ENCODE measurements at regions of chr5 and their contacts with region 1.

Region 1: DNA sequence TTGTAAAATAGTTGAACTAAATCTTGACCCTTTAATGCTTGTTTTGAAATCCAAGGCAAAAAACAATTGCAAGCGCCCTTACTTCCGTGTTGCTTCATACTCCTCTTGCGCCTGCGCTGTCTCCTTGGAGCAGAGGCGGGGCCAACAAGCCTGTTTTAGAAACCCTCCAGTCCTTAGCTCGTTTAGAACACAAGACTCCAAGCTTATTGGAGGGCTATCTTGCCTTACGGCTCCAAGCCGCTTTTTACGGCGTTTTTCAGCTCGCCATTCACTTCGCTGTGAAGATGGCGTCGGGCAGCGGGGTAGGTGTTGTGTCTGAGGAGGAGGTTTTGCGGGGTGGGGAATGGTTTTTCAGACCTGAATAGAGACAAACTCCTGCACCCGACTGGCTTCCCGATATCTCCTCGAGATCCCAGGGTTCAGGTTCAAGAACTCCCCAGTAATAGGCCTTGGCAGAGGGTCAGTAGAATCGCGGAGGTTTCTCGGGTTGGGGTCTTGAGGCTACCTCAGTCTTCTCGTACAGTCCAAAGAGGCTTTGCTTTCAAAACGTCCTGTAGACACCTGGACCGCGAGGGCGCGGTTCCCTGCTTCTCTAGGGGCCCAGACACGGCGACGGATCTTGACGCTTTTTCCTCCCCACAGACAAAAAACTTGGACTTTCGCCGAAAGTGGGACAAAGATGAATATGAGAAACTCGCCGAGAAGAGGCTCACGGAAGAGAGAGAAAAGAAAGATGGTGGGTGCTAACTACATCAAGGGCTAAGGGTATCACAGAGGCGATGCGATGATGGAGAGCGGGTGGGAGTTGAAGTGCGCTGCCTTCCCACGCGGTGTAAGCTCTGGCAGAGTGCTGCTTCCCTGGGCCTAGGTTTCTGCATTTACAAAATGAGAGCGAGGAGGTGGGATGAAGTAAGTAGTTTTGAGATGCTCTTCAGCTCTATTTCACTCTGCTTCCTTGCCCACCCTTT is at the start of gene ZMAT2:
- DNase-seq: peak; percentile 84 to 98 (median 90)
- ATAC-seq: peak; percentile 98
- H3K4me3 ChIP-seq: peak within 1 kb of the TSS; percentile 96
- H3K4me3 Mint-ChIP-seq: peak within 1 kb of the TSS; percentile 96
- H3K27ac ChIP-seq: peak within 1 kb of the TSS; percentile 64 to 90
- H3K27ac Mint-ChIP-seq: peak within 1 kb of the TSS; percentile 85
- H3K4me1 ChIP-seq: peaks cover 13% of the 10 kb centered on the region
- H3K4me1 Mint-ChIP-seq: peaks cover 31% of the 10 kb centered on the region
- H3K27me3 ChIP-seq: no peaks in the 10 kb centered on the region
- H3K27me3 Mint-ChIP-seq: no peaks in the 10 kb centered on the region
- CTCF ChIP-seq: no peak
- total RNA-seq, gene ZMAT2: 29.0 to 32.3 TPM

Region 2: GRCh38 chr5:140628711-140629110 is 71.8 kb before region 1 on chr5:
- CTCF ChIA-PET with region 1: no interaction called
- POLR2A ChIA-PET with region 1: no interaction called
- intact Hi-C with region 1: no loop called
- DNase-seq: no peak
- ATAC-seq: no peak
- H3K4me3 ChIP-seq: no peak overlapping the region
- H3K4me3 Mint-ChIP-seq: no peak overlapping the region
- H3K27ac ChIP-seq: no peak overlapping the region
- H3K27ac Mint-ChIP-seq: no peak overlapping the region
- H3K4me1 ChIP-seq: peaks cover 20% of the 10 kb centered on the region
- H3K4me1 Mint-ChIP-seq: peaks cover 21% of the 10 kb centered on the region
- H3K27me3 ChIP-seq: no peaks in the 10 kb centered on the region
- H3K27me3 Mint-ChIP-seq: no peaks in the 10 kb centered on the region
- CTCF ChIP-seq: no peak

Region 3: GRCh38 chr5:140664359-140665119 is 35.9 kb before region 1 on chr5 and contains the start of gene WDR55:
- CTCF ChIA-PET with region 1: no interaction called
- POLR2A ChIA-PET with region 1: no interaction called
- intact Hi-C with region 1: loop called in 1 of 2 experiments (anchors 5 kb)
- DNase-seq: peak; percentile 90 to 98 (median 95)
- ATAC-seq: peak; percentile 92
- H3K4me3 ChIP-seq: peak within 1 kb of the TSS; percentile 98
- H3K4me3 Mint-ChIP-seq: peak within 1 kb of the TSS; percentile 91
- H3K27ac ChIP-seq: peak within 1 kb of the TSS; percentile 87 to 93
- H3K27ac Mint-ChIP-seq: peak within 1 kb of the TSS; percentile 98
- H3K4me1 ChIP-seq: peaks cover 26% of the 10 kb centered on the region
- H3K4me1 Mint-ChIP-seq: peaks cover 45% of the 10 kb centered on the region
- H3K27me3 ChIP-seq: no peaks in the 10 kb centered on the region
- H3K27me3 Mint-ChIP-seq: no peaks in the 10 kb centered on the region
- CTCF ChIP-seq: no peak
- total RNA-seq, gene WDR55: 40.1 to 42.9 TPM

Region 4: GRCh38 chr5:140916349-140916748 is 215.9 kb after region 1 on chr5:
- CTCF ChIA-PET with region 1: no interaction called
- POLR2A ChIA-PET with region 1: no interaction called
- intact Hi-C with region 1: no loop called
- DNase-seq: no peak
- ATAC-seq: no peak
- H3K4me3 ChIP-seq: no peak overlapping the region
- H3K4me3 Mint-ChIP-seq: no peak overlapping the region
- H3K27ac ChIP-seq: no peak overlapping the region
- H3K27ac Mint-ChIP-seq: no peak overlapping the region
- H3K4me1 ChIP-seq: no peaks in the 10 kb centered on the region
- H3K4me1 Mint-ChIP-seq: no peaks in the 10 kb centered on the region
- H3K27me3 ChIP-seq: no peaks in the 10 kb centered on the region
- H3K27me3 Mint-ChIP-seq: peaks cover 29% of the 10 kb centered on the region
- CTCF ChIP-seq: no peak

Region 5: DNA sequence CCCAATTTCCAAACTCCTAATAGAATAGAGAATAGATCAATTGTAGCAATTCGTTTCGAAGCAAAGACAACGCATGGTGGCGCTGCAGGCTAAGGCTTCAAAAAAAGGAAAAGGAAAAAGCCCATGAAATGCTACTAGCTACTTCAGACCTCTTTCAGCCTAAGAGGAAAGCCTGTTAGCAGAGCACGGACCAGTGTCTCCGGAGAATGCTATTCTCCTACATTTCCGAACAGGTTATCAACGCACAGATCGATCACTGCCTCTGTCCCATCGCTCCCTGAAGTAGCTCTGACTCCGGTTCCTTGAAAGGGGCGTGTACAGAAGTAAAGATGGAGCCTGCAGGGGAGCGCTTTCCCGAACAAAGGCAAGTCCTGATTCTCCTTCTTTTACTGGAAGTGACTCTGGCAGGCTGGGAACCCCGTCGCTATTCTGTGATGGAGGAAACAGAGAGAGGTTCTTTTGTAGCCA is 544.8 kb after region 1 on chr5 and contains the start of gene PCDHB15:
- CTCF ChIA-PET with region 1: no interaction called
- POLR2A ChIA-PET with region 1: no interaction called
- intact Hi-C with region 1: no loop called
- DNase-seq: peak in 4 of 14 experiments; percentile 5 to 42 (median 17)
- ATAC-seq: no peak
- H3K4me3 ChIP-seq: no peak within 1 kb of the TSS
- H3K4me3 Mint-ChIP-seq: peak within 1 kb of the TSS; percentile 51
- H3K27ac ChIP-seq: no peak within 1 kb of the TSS
- H3K27ac Mint-ChIP-seq: no peak within 1 kb of the TSS
- H3K4me1 ChIP-seq: peaks cover 3% of the 10 kb centered on the region
- H3K4me1 Mint-ChIP-seq: peaks cover 4% of the 10 kb centered on the region
- H3K27me3 ChIP-seq: peaks cover 27 to 29% of the 10 kb centered on the region in 2 experiments
- H3K27me3 Mint-ChIP-seq: peaks cover 55% of the 10 kb centered on the region
- CTCF ChIP-seq: no peak
- total RNA-seq, gene PCDHB15: not detected

Measured in CD4-positive, alpha-beta T cell (primary cell).